ENCODE measurements at regions of chr1 and their contacts with region 1.

Region 1: GRCh38 chr1:50582346-50582745 is 159.1 kb upstream of the DMRTA2 start:
- DNase-seq: no peak
- H3K4me3 ChIP-seq: no peak overlapping the region
- H3K27ac ChIP-seq: no peak overlapping the region
- H3K4me1 ChIP-seq: no peaks in the 10 kb centered on the region
- H3K27me3 ChIP-seq: no peaks in the 10 kb centered on the region
- CTCF ChIP-seq: no peak

Region 2: DNA sequence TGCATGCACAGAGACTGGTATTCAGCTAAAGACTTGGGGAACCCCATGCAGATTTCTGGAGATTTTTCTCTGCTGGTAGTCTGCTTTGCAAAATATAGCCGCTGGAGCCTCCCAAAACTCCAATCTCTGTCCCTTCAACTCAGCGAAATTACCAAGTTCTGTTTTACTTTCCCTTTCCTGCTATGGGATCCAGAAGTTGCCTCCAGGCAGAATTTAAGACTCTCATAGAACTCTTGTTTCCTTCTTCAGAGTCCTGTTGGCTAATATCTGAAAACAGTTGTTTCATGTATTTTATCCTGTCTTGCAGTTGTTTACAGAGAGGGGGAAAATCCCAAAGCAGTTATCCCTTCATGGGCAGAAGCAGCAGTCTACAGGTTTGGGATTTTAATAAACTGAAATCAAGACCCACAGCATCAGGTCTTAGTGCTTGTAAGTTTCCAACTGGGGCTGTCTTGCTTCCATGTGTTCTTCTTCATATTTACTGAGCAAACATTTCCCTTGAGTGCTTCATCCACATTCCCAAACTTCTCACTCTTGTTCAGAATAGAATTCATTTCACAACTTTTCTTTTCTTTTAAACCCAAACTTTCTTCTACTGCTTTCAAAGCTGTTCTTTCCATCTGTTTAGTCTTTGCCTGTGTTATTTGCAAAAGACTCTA is 62.2 kb after region 1 on chr1:
- CTCF ChIA-PET with region 1: no interaction called
- POLR2A ChIA-PET with region 1: no interaction called
- intact Hi-C with region 1: no loop called
- DNase-seq: no peak
- H3K4me3 ChIP-seq: no peak overlapping the region
- H3K27ac ChIP-seq: no peak overlapping the region
- H3K4me1 ChIP-seq: no peaks in the 10 kb centered on the region
- H3K27me3 ChIP-seq: no peaks in the 10 kb centered on the region
- CTCF ChIP-seq: no peak

Region 3: DNA sequence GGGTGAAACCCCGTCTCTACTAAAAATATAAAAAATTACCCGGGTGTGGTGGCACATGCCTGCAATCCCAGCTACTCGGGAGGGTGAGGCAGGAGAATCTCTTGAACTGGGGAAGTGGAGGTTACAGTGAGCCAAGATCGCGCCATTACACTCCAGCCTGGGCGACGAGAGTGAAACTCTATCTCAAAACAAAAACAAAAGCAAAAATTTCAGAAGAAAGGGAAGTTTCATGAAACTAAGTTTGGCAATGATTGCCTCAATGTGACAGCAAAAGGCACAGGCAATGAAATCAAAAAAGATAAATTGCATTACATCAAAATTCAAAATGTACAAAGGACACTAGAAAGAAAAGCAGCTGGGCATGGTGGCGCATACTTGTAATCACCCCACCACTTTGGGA is 1513.9 kb after region 1 on chr1:
- CTCF ChIA-PET with region 1: no interaction called
- POLR2A ChIA-PET with region 1: interaction called, 12 read pairs
- intact Hi-C with region 1: no loop called
- DNase-seq: no peak
- H3K4me3 ChIP-seq: no peak overlapping the region
- H3K27ac ChIP-seq: no peak overlapping the region
- H3K4me1 ChIP-seq: no peaks in the 10 kb centered on the region
- H3K27me3 ChIP-seq: no peaks in the 10 kb centered on the region
- CTCF ChIP-seq: no peak